ENCODE measurements at regions of chr2 and their contacts with region 1.

Region 1: DNA sequence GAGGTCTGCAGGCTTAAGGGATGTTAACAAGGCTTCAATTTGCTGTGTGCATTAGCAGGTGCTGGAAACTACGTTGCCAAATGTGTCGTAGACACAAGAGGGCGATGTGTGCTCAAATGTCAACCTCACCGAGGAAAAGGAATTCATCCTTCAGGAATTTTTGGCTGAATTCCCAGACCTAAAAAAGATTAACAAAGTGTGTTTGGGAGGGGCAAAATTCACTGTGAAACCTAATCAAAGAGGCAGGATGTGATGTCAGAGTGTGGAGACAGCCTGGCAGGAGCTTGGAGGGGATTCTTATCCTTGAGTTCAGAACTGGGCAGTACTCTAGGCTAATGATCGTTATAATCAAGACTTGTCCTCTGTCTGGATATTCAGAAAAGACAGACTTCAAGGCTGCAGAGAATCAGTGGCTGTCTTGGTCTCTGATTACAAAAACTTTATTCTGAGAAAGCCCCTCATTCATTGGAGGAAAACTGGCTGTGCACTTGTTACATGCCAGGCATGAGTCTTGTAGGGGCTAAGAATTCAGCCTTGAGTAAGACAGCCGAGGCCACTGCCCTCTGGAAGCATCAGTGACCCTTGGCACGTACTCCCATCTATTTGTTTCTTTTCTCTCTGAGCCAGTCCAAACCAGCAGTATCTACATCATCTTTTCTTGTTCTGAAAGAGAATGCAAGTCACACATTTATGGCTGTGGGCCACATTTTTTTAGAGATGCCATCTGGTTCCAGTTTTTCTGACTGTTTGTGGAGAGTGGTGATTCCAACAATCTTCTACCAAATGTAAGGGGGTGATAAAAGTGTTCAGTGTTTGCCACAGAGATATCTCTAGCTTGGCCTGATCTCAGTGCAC is 18.7 kb upstream of the SCYGR1 start:
- DNase-seq: peak; percentile 78
- H3K4me3 Mint-ChIP-seq: no peak overlapping the region
- H3K27ac Mint-ChIP-seq: peak overlapping the region; percentile 86
- H3K4me1 Mint-ChIP-seq: peaks cover 50% of the 10 kb centered on the region
- H3K27me3 Mint-ChIP-seq: no peaks in the 10 kb centered on the region
- CTCF ChIP-seq: peak; percentile 69

Region 2: DNA sequence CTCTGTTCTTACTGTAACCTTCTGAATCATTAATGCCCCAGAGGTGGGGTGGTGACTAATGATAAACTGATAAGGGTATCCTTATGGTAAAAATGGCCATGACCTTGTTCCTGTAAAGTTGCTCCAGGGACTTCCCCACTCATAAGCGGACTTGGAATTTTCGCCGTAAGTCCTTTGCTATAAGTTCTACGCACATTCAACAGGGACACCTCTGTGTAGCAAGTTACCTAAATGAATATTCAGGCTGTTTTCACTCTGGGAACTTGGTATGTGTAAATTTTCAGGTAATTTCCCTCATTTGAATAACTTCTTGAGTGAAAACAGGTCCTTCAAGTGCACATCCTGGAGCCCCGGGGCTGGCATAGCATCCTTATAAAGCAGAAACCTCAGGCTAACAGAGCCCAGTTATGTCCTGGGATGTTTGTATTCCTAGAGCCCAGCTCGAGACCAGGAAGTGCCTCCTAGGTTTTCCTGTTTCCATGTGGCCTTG is 56.1 kb after region 1 on chr2:
- CTCF ChIA-PET with region 1: no interaction called
- intact Hi-C with region 1: loop called (anchors 2 kb)
- DNase-seq: peak; percentile 47
- H3K4me3 Mint-ChIP-seq: no peak overlapping the region
- H3K27ac Mint-ChIP-seq: no peak overlapping the region
- H3K4me1 Mint-ChIP-seq: peaks cover 55% of the 10 kb centered on the region
- H3K27me3 Mint-ChIP-seq: no peaks in the 10 kb centered on the region
- CTCF ChIP-seq: no peak

Region 3: GRCh38 chr2:227493524-227493923 is 87.1 kb after region 1 on chr2:
- CTCF ChIA-PET with region 1: no interaction called
- intact Hi-C with region 1: no loop called
- DNase-seq: no peak
- H3K4me3 Mint-ChIP-seq: no peak overlapping the region
- H3K27ac Mint-ChIP-seq: no peak overlapping the region
- H3K4me1 Mint-ChIP-seq: peaks cover 11% of the 10 kb centered on the region
- H3K27me3 Mint-ChIP-seq: no peaks in the 10 kb centered on the region
- CTCF ChIP-seq: no peak

Region 4: DNA sequence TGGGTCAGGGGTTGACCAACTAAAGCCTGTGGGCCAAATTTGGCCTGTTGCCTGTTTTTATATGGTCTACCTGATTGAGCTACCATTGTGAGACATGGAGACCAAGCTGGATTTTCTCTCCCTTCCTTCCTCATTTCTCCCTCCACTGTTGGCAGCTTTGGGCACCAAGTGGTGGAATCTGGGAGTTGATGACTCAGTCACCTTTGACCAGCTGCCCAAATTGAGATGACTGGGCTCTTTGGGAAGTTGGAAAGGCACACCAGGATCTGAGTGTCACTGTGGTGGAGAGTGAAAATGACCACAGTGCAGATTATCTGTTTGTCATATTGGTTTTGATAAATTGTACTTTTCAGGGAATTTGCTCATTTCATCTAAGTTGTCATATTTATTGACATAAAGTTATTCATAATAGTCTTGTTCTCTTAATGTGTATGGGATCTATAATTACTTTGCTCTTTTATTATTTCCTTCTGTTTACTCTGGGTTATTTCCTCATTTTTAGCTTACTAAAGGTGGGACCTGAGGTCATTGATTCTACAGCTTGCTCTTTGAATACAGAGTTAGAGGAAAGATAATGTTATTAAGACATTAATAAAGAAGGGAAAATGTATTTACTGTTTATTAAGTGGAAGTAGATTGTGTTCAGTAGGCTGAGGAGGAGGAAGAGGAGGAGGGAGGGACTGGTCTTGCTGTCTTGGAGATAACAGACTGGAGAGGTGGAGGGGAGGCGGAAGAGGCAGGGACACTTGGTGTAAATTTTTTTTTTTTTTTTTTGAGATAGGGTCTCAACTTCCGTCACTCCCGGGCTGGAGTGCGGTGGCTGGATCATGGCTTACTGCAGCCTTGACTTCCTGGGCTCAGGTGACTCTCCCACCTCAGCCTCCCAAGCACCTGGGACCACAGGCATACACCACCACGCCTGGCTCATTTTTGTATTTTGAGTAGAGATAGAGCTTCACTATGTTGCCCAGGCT is 97.3 kb after region 1 on chr2:
- CTCF ChIA-PET with region 1: interaction called, 11 read pairs
- intact Hi-C with region 1: no loop called
- DNase-seq: peak; percentile 69
- H3K4me3 Mint-ChIP-seq: peak overlapping the region; percentile 33
- H3K27ac Mint-ChIP-seq: peak overlapping the region; percentile 80
- H3K4me1 Mint-ChIP-seq: peaks cover 69% of the 10 kb centered on the region
- H3K27me3 Mint-ChIP-seq: no peaks in the 10 kb centered on the region
- CTCF ChIP-seq: no peak

Region 5: GRCh38 chr2:227655454-227655853 is 249.1 kb after region 1 on chr2:
- CTCF ChIA-PET with region 1: no interaction called
- intact Hi-C with region 1: loop called (anchors 1 kb)
- DNase-seq: peak; percentile 9
- H3K4me3 Mint-ChIP-seq: no peak overlapping the region
- H3K27ac Mint-ChIP-seq: peak overlapping the region; percentile 14
- H3K4me1 Mint-ChIP-seq: peaks cover 25% of the 10 kb centered on the region
- H3K27me3 Mint-ChIP-seq: no peaks in the 10 kb centered on the region
- CTCF ChIP-seq: no peak

Region 6: GRCh38 chr2:227862227-227862740 is 455.9 kb after region 1 on chr2:
- CTCF ChIA-PET with region 1: interaction called, 5 read pairs
- intact Hi-C with region 1: loop called (anchors 5 kb)
- DNase-seq: peak; percentile 63
- H3K4me3 Mint-ChIP-seq: no peak overlapping the region
- H3K27ac Mint-ChIP-seq: peak overlapping the region; percentile 69
- H3K4me1 Mint-ChIP-seq: peaks cover 38% of the 10 kb centered on the region
- H3K27me3 Mint-ChIP-seq: no peaks in the 10 kb centered on the region
- CTCF ChIP-seq: peak; percentile 49

Measured in Calu3 (cell line).